PC-9 (cell line): ENCODE measurements at regions of chr6 and their contacts with region 1.

Region 1: GRCh38 chr6:44475779-44476434 is 88.4 kb downstream of the CDC5L start:
- DNase-seq: peak; percentile 54 to 86
- H3K4me3 ChIP-seq: no peak overlapping the region
- H3K27ac ChIP-seq: no peak overlapping the region
- H3K4me1 ChIP-seq: peaks cover 18% of the 10 kb centered on the region
- H3K27me3 ChIP-seq: no peaks in the 10 kb centered on the region
- CTCF ChIP-seq: peak; percentile 92

Region 2: DNA sequence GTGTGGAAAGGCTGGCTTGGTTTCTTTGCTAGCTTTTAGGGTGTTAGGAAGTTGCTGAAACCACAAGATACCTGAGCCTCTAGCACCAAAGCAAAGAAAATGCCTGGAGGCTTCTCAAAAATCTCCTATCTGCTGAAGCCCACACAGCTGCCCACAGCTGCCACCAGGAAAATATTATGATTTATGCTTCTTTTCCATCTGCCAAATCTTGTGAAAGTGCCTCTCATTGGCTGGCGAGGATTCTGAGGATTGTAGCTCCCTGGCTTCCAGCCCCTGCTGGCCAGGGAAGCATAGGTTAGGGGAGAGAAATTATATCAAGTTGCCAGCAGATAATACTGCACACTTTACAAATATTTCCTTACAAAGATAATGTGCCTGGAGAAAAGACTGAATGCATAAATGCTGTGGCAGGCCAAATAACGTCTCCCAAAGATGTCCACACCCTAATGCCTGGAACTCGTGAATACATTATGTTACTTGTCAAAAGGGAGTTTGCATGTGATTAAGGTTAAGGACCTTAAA is 447.1 kb before region 1 on chr6:
- CTCF ChIA-PET with region 1: no interaction called
- POLR2A ChIA-PET with region 1: no interaction called
- intact Hi-C with region 1: no loop called
- DNase-seq: peak; percentile 49 to 76
- H3K4me3 ChIP-seq: no peak overlapping the region
- H3K27ac ChIP-seq: peak overlapping the region; percentile 50
- H3K4me1 ChIP-seq: peaks cover 68% of the 10 kb centered on the region
- H3K27me3 ChIP-seq: no peaks in the 10 kb centered on the region
- CTCF ChIP-seq: peak; percentile 32; the same call in 1 of the 2 replicates

Region 3: DNA sequence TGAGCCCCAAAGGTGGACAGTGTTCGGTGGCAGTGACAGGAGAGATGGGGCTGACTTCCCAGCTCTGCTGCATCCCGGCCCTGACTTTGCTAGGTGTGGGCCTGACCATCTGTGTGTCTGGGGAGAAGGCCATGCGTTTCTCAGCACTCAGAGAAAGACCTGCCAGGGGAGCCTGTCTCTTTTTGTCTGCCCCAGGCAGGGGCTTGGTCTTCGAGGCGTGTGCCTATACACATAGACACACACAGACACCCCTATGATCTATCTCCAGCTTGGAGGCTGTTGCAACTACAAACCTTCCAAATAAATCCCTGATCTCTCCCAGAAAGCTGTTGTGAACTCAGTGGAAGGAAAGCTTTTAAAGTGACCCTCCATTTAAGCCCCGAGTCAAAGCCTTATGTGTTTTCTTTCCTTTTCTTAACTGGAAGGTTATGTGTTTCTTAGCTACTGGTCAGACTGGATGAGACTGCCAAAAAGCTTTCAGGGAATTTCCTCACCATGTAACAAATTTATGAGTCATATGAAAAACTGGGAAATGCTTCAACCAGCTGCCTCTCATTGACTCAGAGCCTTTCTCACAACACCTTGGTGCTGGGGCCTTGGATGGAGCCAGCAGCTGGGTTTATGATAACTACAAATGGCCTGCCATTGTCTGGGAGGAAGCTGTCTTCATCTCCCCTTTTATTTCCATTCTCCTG is 14.2 kb after region 1 on chr6:
- CTCF ChIA-PET with region 1: interaction called, 21 read pairs
- POLR2A ChIA-PET with region 1: interaction called, 11 read pairs
- intact Hi-C with region 1: no loop called
- DNase-seq: peak; percentile 47 to 86
- H3K4me3 ChIP-seq: peak overlapping the region; percentile 38; the same call in 1 of the 2 replicates
- H3K27ac ChIP-seq: peak overlapping the region; percentile 85
- H3K4me1 ChIP-seq: peaks cover 38% of the 10 kb centered on the region
- H3K27me3 ChIP-seq: no peaks in the 10 kb centered on the region
- CTCF ChIP-seq: no peak

Region 4: GRCh38 chr6:44630125-44631028 is 154.5 kb after region 1 on chr6:
- CTCF ChIA-PET with region 1: interaction called, 16 read pairs
- POLR2A ChIA-PET with region 1: no interaction called
- intact Hi-C with region 1: no loop called
- DNase-seq: peak in 1 of 2 experiments; percentile 57
- H3K4me3 ChIP-seq: no peak overlapping the region
- H3K27ac ChIP-seq: no peak overlapping the region
- H3K4me1 ChIP-seq: no peaks in the 10 kb centered on the region
- H3K27me3 ChIP-seq: no peaks in the 10 kb centered on the region
- CTCF ChIP-seq: peak; percentile 74

Region 5: GRCh38 chr6:44655412-44656342 is 179.8 kb after region 1 on chr6:
- CTCF ChIA-PET with region 1: no interaction called
- POLR2A ChIA-PET with region 1: no interaction called
- intact Hi-C with region 1: loop called (anchors 1 kb)
- DNase-seq: peak; percentile 77 to 79
- H3K4me3 ChIP-seq: no peak overlapping the region
- H3K27ac ChIP-seq: peak overlapping the region; percentile 34; the same call in 1 of the 2 replicates
- H3K4me1 ChIP-seq: peaks cover 10% of the 10 kb centered on the region; the same call in 1 of the 2 replicates
- H3K27me3 ChIP-seq: no peaks in the 10 kb centered on the region
- CTCF ChIP-seq: peak; percentile 98

Region 6: DNA sequence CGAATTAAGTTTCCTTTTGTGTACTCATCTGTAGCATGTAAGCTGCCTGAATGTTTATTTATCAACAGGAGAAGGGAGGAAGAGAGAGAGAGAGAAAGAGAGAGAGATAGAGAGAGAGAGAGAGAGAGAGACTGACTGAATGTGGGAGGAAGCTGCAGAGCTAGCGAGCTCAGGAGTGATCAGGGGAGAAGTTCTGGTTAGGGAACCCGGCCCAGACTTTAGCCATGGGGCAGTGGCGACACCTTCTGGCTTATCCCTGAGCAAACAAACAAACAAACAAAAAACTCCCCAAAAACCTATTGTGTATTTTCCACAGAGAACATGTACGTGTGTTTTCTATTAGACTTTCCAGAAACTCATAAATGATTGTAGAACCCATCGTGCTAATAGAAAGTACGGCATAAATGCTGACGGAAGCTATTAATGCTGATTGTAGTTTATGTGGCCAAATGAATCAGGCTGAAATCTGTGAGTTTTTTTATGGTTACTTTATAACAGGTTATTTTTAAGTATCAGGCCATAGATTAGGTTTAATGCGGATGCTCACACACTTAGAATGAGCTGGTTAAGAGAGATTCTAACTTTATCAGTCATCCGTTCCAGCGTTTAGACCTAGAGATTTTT is 1446.9 kb after region 1 on chr6:
- CTCF ChIA-PET with region 1: interaction called, 14 read pairs
- POLR2A ChIA-PET with region 1: no interaction called
- intact Hi-C with region 1: loop called (anchors 2 kb)
- DNase-seq: peak; percentile 41 to 64
- H3K4me3 ChIP-seq: no peak overlapping the region
- H3K27ac ChIP-seq: no peak overlapping the region
- H3K4me1 ChIP-seq: 0 out of 2 replicates have a peak, but pooled peaks cover 3% of the 10 kb centered on the region
- H3K27me3 ChIP-seq: no peaks in the 10 kb centered on the region
- CTCF ChIP-seq: peak; percentile 84

Region 7: GRCh38 chr6:46410334-46410953 is 1934.5 kb after region 1 on chr6:
- CTCF ChIA-PET with region 1: no interaction called
- POLR2A ChIA-PET with region 1: no interaction called
- intact Hi-C with region 1: loop called (anchors 5 kb)
- DNase-seq: peak in 1 of 2 experiments; percentile 23
- H3K4me3 ChIP-seq: no peak overlapping the region
- H3K27ac ChIP-seq: no peak overlapping the region
- H3K4me1 ChIP-seq: no peaks in the 10 kb centered on the region
- H3K27me3 ChIP-seq: no peaks in the 10 kb centered on the region
- CTCF ChIP-seq: peak; percentile 91